ENCODE measurements at regions of chr14 and their contacts with region 1.

Region 1: GRCh38 chr14:98270201-98270600 is 1001.8 kb downstream of the BCL11B start:
- DNase-seq: peak; percentile 63
- H3K4me3 ChIP-seq: no peak overlapping the region
- H3K27ac ChIP-seq: peak overlapping the region; percentile 49
- H3K4me1 ChIP-seq: peaks cover 11% of the 10 kb centered on the region
- H3K27me3 ChIP-seq: no peaks in the 10 kb centered on the region
- CTCF ChIP-seq: no peak

Region 2: DNA sequence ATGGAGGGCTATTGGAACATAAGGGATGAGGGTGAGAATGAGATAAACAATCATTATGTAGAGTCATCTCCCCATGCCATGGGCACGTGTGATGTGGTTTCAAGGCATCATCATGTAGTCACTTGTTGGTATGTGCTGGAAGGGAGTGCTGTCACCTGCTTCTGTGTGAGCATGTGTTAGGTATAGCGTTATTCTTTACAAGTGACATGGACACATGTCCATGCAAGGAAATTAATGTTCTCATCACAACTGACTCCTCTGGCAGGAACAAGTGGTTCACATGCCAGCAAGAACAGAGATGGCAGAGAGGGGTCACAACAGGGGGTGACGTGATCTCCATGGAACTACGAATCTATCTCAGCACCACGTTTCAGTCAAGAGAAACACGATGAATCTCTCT is 186.0 kb after region 1 on chr14:
- CTCF ChIA-PET with region 1: interaction called, 10 read pairs
- dilution Hi-C with region 1: no loop called
- in situ Hi-C with region 1: no loop called
- intact Hi-C with region 1: no loop called
- DNase-seq: no peak
- H3K4me3 ChIP-seq: no peak overlapping the region
- H3K27ac ChIP-seq: no peak overlapping the region
- H3K4me1 ChIP-seq: no peaks in the 10 kb centered on the region
- H3K27me3 ChIP-seq: no peaks in the 10 kb centered on the region
- CTCF ChIP-seq: no peak

Measured in mammary epithelial cell (primary cell).